CD8-positive, alpha-beta T cell (primary cell): ENCODE measurements at regions of chr22 and their contacts with region 1.

Region 1: DNA sequence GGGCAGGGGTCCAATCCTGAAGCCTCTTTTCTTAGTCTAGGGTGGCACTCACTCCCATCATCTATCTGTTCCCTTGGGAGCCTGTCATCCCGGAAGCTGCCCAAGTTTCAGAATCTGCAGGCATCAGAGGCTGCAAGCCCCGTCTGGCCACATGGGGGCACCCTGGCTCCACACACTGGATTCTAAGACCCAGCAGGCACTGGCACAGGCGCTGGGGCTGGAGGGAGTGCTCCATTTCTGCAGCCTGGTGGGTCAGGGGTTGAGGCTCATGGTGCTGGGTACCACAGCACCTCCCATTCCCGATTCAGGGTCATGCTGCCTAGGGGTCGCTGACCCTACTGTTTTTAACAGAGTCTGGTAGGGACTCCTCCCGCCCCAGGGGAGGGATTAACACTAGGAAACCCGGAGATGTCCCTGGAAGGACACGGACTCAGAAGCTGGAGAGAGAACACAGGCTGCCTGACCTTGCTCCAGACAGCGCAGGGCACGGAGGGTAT is 243.9 kb upstream of the SYN3 start:
- DNase-seq: peak in 8 of 9 experiments; percentile 4 to 50 (median 34)
- ATAC-seq: no peak
- H3K4me3 ChIP-seq: no peak overlapping the region
- H3K4me3 Mint-ChIP-seq: no peak overlapping the region
- H3K27ac ChIP-seq: no peak overlapping the region
- H3K27ac Mint-ChIP-seq: no peak overlapping the region
- H3K4me1 ChIP-seq: no peaks in the 10 kb centered on the region
- H3K4me1 Mint-ChIP-seq: no peaks in the 10 kb centered on the region
- H3K27me3 ChIP-seq: no peaks in the 10 kb centered on the region
- H3K27me3 Mint-ChIP-seq: peaks cover 8% of the 10 kb centered on the region
- CTCF ChIP-seq: no peak

Region 2: DNA sequence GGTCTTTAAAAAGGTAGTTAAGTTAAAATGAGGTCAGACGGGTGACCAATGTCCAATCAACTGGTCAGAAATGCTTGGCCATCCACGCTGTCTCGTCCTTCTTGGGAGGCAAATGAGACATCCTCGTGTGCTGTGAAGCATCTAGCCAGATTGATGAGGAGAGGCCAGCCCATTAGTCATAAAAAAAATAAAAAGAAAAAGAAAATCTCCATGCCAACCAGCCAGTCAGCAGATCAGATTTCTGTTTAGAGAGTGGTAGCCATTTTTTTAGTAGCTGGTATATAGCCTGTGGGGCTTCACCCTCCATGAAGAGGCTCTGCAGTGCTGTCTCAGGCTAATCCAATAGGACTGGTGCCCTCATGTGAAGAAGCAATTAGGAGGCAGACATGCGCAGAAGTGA is 99.2 kb after region 1 on chr22:
- CTCF ChIA-PET with region 1: no interaction called
- POLR2A ChIA-PET with region 1: no interaction called
- intact Hi-C with region 1: no loop called
- DNase-seq: no peak
- ATAC-seq: no peak
- H3K4me3 ChIP-seq: no peak overlapping the region
- H3K4me3 Mint-ChIP-seq: no peak overlapping the region
- H3K27ac ChIP-seq: no peak overlapping the region
- H3K27ac Mint-ChIP-seq: no peak overlapping the region
- H3K4me1 ChIP-seq: no peaks in the 10 kb centered on the region
- H3K4me1 Mint-ChIP-seq: no peaks in the 10 kb centered on the region
- H3K27me3 ChIP-seq: no peaks in the 10 kb centered on the region
- H3K27me3 Mint-ChIP-seq: no peaks in the 10 kb centered on the region
- CTCF ChIP-seq: no peak

Region 3: GRCh38 chr22:33579448-33580093 is 277.5 kb after region 1 on chr22:
- CTCF ChIA-PET with region 1: no interaction called
- POLR2A ChIA-PET with region 1: no interaction called
- intact Hi-C with region 1: loop called in 1 of 2 experiments (anchors 5 kb)
- DNase-seq: peak in 6 of 9 experiments; percentile 5 to 48 (median 8)
- ATAC-seq: no peak
- H3K4me3 ChIP-seq: no peak overlapping the region
- H3K4me3 Mint-ChIP-seq: no peak overlapping the region
- H3K27ac ChIP-seq: no peak overlapping the region
- H3K27ac Mint-ChIP-seq: no peak overlapping the region
- H3K4me1 ChIP-seq: no peaks in the 10 kb centered on the region
- H3K4me1 Mint-ChIP-seq: no peaks in the 10 kb centered on the region
- H3K27me3 ChIP-seq: no peaks in the 10 kb centered on the region
- H3K27me3 Mint-ChIP-seq: no peaks in the 10 kb centered on the region
- CTCF ChIP-seq: peak; percentile 28

Region 4: GRCh38 chr22:34111210-34111824 is 809.2 kb after region 1 on chr22:
- CTCF ChIA-PET with region 1: no interaction called
- POLR2A ChIA-PET with region 1: no interaction called
- intact Hi-C with region 1: loop called in 1 of 2 experiments (anchors 5 kb)
- DNase-seq: peak in 3 of 9 experiments; percentile 7 to 23 (median 18)
- ATAC-seq: no peak
- H3K4me3 ChIP-seq: no peak overlapping the region
- H3K4me3 Mint-ChIP-seq: no peak overlapping the region
- H3K27ac ChIP-seq: no peak overlapping the region
- H3K27ac Mint-ChIP-seq: no peak overlapping the region
- H3K4me1 ChIP-seq: no peaks in the 10 kb centered on the region
- H3K4me1 Mint-ChIP-seq: no peaks in the 10 kb centered on the region
- H3K27me3 ChIP-seq: no peaks in the 10 kb centered on the region
- H3K27me3 Mint-ChIP-seq: peaks cover 2% of the 10 kb centered on the region
- CTCF ChIP-seq: peak; percentile 56

Region 5: DNA sequence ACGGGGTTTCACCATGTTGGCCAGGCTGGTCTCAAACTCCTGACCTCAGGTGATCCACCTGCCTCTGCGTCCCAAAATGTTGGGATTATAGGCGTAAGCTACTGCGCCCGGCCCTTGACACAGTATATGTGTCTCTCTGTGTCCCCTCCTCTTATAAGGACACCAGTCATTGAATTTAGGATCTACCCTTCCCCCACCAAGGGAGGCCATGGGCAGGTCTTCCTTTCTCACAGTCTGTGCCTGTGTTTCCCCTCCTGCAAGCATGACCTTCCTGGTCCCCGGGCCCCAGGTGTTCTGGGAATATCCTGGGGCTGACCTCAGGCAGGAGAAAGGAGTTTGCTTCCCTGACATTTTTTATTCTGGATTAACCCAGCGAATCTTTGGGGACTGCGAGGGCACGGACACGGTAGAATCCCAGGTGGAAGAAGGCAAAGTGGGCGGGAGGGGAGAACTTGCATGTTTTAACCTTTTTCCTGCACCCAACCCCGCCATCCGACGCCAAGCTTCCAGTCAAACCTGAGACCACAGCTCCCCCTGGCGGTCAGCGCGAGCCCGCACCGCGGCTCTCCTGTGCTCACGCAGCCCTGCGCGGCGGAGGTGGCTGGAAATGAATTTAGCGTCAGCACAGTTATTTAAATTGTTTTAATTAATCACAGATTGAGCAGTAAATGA is 1721.7 kb after region 1 on chr22:
- CTCF ChIA-PET with region 1: no interaction called
- POLR2A ChIA-PET with region 1: no interaction called
- intact Hi-C with region 1: loop called in 1 of 2 experiments (anchors 5 kb)
- DNase-seq: peak in 7 of 9 experiments; percentile 8 to 49 (median 32)
- ATAC-seq: no peak
- H3K4me3 ChIP-seq: no peak overlapping the region
- H3K4me3 Mint-ChIP-seq: no peak overlapping the region
- H3K27ac ChIP-seq: no peak overlapping the region
- H3K27ac Mint-ChIP-seq: no peak overlapping the region
- H3K4me1 ChIP-seq: no peaks in the 10 kb centered on the region
- H3K4me1 Mint-ChIP-seq: no peaks in the 10 kb centered on the region
- H3K27me3 ChIP-seq: peaks cover 0 to 5% of the 10 kb centered on the region in 2 experiments
- H3K27me3 Mint-ChIP-seq: peaks cover 24% of the 10 kb centered on the region
- CTCF ChIP-seq: peak; percentile 43

Region 6: DNA sequence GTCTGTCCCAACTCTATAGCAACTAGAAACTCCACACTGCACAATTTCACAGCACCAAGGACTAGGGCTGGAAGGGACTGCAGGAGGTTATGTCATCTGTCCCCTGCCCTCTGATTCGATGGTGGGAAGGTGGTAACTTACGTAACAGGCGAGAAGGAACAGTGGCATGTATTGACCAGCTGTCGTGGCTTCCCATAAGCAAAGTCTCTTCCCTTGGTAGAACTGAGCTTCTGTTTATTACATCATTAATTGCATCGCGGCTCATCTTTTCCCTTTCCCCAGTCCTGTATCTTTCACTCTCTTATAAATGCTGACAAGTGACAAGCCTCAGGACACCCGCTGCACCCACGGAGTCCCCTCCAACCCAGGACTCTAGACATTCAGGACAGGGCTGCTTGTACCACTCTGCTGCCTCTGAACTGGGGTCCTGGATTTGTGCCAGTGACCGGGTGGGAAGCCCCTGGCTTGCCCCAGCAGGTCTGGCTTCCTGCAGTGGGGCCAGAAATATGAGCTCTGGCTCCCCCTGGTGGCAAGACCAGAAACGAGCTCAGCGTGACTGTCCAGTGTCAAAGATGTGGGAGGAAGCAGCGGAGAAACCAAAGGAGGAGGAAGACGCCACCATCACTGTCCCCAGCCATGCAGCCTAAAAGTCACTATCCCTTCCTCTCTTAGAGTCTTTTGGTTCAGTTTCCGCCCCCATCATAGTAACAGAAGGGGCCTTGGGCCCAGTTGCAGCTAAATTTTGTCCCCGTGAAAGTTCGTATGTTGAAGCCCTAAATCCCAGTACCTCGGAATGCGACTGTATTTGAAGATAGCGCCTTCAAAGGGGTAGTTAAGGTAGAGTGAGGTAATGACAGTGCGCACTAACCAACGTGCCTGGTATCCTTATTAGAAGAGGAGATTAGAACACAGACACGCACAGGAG is 1848.3 kb after region 1 on chr22:
- CTCF ChIA-PET with region 1: no interaction called
- POLR2A ChIA-PET with region 1: no interaction called
- intact Hi-C with region 1: loop called in 1 of 2 experiments (anchors 5 kb)
- DNase-seq: peak; percentile 18 to 67 (median 52)
- ATAC-seq: no peak
- H3K4me3 ChIP-seq: no peak overlapping the region
- H3K4me3 Mint-ChIP-seq: no peak overlapping the region
- H3K27ac ChIP-seq: no peak overlapping the region
- H3K27ac Mint-ChIP-seq: no peak overlapping the region
- H3K4me1 ChIP-seq: no peaks in the 10 kb centered on the region
- H3K4me1 Mint-ChIP-seq: peaks cover 8% of the 10 kb centered on the region
- H3K27me3 ChIP-seq: peaks cover 0 to 2% of the 10 kb centered on the region in 2 experiments
- H3K27me3 Mint-ChIP-seq: peaks cover 34% of the 10 kb centered on the region
- CTCF ChIP-seq: peak; percentile 72